ENCODE measurements at regions of chr16 and their contacts with region 1.

Region 1: DNA sequence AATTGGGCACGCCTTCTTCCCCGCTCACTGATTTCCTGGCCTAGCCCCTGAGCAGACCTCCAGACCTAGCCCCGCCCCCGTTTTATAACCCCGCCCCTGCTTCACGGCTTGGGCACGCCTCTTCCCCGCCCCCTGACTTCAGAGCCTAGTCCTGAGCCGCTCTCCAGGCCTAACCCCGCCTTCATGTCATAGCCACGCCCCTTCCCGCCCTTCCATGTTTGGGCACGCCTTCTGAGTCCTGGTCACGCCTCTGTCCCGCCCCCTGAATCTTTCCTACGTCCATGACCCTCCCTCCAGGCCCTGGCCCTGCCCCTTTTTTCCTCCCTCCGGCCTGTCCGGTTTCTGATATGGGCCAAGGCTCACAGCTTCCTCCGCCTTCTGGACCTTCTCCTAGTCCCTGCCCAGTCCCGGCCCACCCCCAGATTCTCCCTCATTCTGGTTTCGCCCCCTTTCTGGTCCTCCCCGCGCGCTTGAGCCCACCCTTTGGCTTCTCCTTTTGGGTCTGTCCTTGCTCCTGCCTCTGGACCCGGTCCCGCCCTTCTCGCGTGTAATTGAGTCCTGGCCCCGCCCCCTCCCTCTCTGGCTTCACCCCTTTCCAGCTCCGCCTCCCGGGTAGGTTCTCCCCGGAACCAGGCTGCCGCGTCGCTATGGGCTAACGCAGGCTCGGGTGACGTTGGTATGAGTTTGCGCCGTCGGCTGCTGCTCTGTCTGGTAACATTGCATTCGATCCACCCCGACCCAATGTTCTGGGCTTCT is 15.1 kb upstream of the EEF2K start:
- DNase-seq: peak; percentile 98 to 100 (median 100)
- H3K4me3 ChIP-seq: peak overlapping the region; percentile 68 to 96 (median 88)
- H3K27ac ChIP-seq: peak overlapping the region; percentile 82 to 99 (median 97)
- H3K27me3 ChIP-seq: no peaks in the 10 kb centered on the region
- CTCF ChIP-seq: peak in 5 of 56 donors; percentile 5 to 13 (median 8)

Region 2: GRCh38 chr16:21523411-21524067 is 667.4 kb before region 1 on chr16:
- intact Hi-C with region 1: loop called in 1 of 2 experiments (anchors 10 kb)
- DNase-seq: peak in 9 of 10 donors; percentile 43 to 90 (median 84)
- H3K4me3 ChIP-seq: peak overlapping the region in 1 of 59 donors; percentile 2
- H3K27ac ChIP-seq: peak overlapping the region in 54 of 59 donors; percentile 2 to 77 (median 38)
- H3K27me3 ChIP-seq: no peaks in the 10 kb centered on the region
- CTCF ChIP-seq: no peak

Region 3: GRCh38 chr16:22001591-22001990 is 189.4 kb before region 1 on chr16:
- intact Hi-C with region 1: loop called (anchors 2 kb)
- DNase-seq: no peak
- H3K4me3 ChIP-seq: peak overlapping the region in 6 of 59 donors; percentile 37 to 54 (median 44)
- H3K27ac ChIP-seq: no peak overlapping the region
- H3K27me3 ChIP-seq: no peaks in the 10 kb centered on the region
- CTCF ChIP-seq: no peak

Region 4: GRCh38 chr16:22206013-22206841 is 15.3 kb after region 1 on chr16 and contains the start of gene EEF2K:
- intact Hi-C with region 1: loop called in 1 of 2 experiments (anchors 2 kb)
- DNase-seq: peak; percentile 66 to 87 (median 82)
- H3K4me3 ChIP-seq: peak within 1 kb of the TSS; percentile 63 to 95 (median 87)
- H3K27ac ChIP-seq: peak within 1 kb of the TSS in 58 of 59 donors; percentile 41 to 93 (median 85)
- H3K27me3 ChIP-seq: no peaks in the 10 kb centered on the region
- CTCF ChIP-seq: peak; percentile 58 to 92 (median 78)
- total RNA-seq, gene EEF2K: 14.7 to 60.6 (median 28.2) TPM

Region 5: DNA sequence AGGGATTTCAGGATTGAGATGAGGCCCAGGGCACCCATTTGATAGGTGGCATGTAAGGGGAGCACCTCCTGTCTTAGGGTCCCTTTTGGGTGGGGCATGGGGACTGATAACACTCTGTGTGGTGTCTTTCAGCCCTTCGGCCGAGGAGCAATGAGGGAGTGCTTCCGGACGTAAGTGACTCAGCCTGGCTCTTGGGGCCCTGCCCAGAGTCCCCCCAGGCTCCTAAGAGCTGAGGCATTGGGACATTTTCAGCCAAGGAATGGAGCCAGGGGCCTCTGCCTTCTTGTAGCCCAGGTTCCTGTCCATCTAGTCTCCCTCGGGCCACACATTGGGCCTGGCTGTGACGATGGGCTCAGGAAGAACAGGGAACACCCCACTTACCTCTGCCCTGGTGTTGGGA is 59.6 kb after region 1 on chr16:
- intact Hi-C with region 1: no loop called
- DNase-seq: no peak
- H3K4me3 ChIP-seq: no peak overlapping the region
- H3K27ac ChIP-seq: no peak overlapping the region
- H3K27me3 ChIP-seq: no peaks in the 10 kb centered on the region
- CTCF ChIP-seq: no peak

Region 6: DNA sequence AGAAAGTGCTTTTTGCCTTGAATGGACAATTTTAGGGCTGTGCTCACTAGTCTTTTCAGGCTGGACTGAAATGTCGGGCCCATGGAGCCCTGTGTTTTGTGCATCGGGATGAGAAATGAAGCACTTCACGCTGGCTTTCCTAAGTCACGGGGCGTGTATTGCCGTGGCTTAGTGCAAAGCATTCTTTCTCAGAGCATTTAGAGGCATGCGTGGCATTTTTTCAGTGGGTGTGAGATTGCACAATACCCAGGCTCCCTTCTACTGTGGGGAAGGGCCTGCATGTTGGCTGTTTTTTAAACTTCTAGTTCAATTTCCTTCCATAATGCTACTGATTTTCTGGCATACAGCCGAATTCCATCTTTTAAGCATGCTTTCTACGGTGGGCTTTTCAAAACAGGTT is 93.7 kb after region 1 on chr16:
- intact Hi-C with region 1: no loop called
- DNase-seq: no peak
- H3K4me3 ChIP-seq: no peak overlapping the region
- H3K27ac ChIP-seq: no peak overlapping the region
- H3K27me3 ChIP-seq: no peaks in the 10 kb centered on the region
- CTCF ChIP-seq: no peak

Region 7: DNA sequence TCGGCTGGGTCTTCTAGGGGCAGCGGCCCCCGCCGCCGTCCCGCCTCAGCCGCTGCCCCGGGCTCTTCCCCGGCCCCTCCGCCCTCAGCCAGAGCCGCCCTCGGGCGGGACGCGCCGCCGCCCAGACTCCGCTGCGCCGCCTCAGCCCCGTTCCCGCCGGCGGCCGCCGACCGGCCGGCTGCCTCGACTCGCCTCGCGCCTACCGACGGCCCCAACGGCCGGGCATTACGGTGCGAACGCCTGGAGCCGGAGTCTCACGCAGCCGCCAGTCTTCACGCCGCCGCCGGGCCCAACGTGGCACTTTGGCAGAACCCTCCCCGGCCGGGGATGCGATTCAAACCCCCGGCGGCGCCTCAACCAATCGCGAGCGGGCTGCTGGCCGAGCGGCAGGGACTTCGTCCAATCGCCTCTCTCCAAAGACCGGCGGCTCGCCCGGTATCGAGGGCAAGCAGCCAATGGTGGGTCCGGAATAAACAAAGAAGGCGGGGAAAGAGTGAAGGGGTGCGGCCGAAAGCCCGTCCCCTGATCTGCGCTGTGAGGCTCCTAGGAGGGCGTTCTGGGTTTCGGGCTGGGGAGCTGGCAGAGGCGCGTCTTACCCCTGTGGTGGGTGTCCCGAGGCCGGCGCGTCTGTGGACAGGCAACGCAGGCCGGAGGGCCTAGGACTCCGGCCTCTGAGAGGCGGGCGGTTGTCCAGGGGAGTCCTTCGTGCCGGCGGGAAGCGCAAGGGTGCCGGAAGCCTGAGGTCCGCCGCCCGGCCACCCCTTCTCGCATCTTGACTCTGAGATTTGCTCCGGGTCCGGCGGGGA is 183.6 kb after region 1 on chr16 and contains the start of gene CDR2:
- intact Hi-C with region 1: loop called (anchors 5 kb)
- DNase-seq: peak; percentile 92 to 99 (median 96)
- H3K4me3 ChIP-seq: peak within 1 kb of the TSS; percentile 54 to 97 (median 84)
- H3K27ac ChIP-seq: peak within 1 kb of the TSS in 21 of 59 donors; percentile 7 to 88 (median 42)
- H3K27me3 ChIP-seq: no peaks in the 10 kb centered on the region
- CTCF ChIP-seq: peak in 18 of 56 donors; percentile 6 to 46 (median 27)
- total RNA-seq, gene CDR2: 7.3 to 37.6 (median 23.1) TPM